Aorta (tissue), 5 donors: ENCODE measurements at regions of chr5 and their contacts with region 1.

Region 1: GRCh38 chr5:83844449-83845068 is 123.9 kb upstream of the HAPLN1 start:
- DNase-seq: peak in 1 of 2 donors; percentile 47
- ATAC-seq: peak; percentile 55
- H3K4me3 ChIP-seq: peak overlapping the region in 1 of 2 donors; percentile 24
- H3K27ac ChIP-seq: no peak overlapping the region
- H3K4me1 ChIP-seq: peaks cover 0 to 2% of the 10 kb centered on the region in 2 donors
- H3K27me3 ChIP-seq: no peaks in the 10 kb centered on the region

Region 2: GRCh38 chr5:84032324-84032723 is 187.8 kb after region 1 on chr5:
- intact Hi-C with region 1: loop called in 1 of 2 experiments (anchors 5 kb)
- DNase-seq: no peak
- ATAC-seq: no peak
- H3K4me3 ChIP-seq: no peak overlapping the region
- H3K27ac ChIP-seq: no peak overlapping the region
- H3K4me1 ChIP-seq: peaks cover 2 to 3% of the 10 kb centered on the region in 2 donors
- H3K27me3 ChIP-seq: no peaks in the 10 kb centered on the region